ENCODE measurements at regions of chr6 and their contacts with region 1.

Region 1: GRCh38 chr6:138403801-138404661 is at the start of gene HEBP2:
- DNase-seq: peak; percentile 53 to 93 (median 73)
- H3K4me3 ChIP-seq: peak within 1 kb of the TSS; percentile 58 to 95 (median 81)
- H3K27ac ChIP-seq: peak within 1 kb of the TSS in 58 of 59 donors; percentile 43 to 93 (median 83)
- H3K27me3 ChIP-seq: no peaks in the 10 kb centered on the region
- CTCF ChIP-seq: peak in 54 of 56 donors; percentile 20 to 82 (median 60)
- total RNA-seq, gene HEBP2: 8.3 to 29.9 (median 17.4) TPM

Region 2: GRCh38 chr6:138129190-138129589 is 274.8 kb before region 1 on chr6:
- intact Hi-C with region 1: loop called in 1 of 2 experiments (anchors 10 kb)
- DNase-seq: no peak
- H3K4me3 ChIP-seq: no peak overlapping the region
- H3K27ac ChIP-seq: no peak overlapping the region
- H3K27me3 ChIP-seq: no peaks in the 10 kb centered on the region
- CTCF ChIP-seq: peak in 4 of 56 donors; percentile 6 to 15 (median 12)

Region 3: DNA sequence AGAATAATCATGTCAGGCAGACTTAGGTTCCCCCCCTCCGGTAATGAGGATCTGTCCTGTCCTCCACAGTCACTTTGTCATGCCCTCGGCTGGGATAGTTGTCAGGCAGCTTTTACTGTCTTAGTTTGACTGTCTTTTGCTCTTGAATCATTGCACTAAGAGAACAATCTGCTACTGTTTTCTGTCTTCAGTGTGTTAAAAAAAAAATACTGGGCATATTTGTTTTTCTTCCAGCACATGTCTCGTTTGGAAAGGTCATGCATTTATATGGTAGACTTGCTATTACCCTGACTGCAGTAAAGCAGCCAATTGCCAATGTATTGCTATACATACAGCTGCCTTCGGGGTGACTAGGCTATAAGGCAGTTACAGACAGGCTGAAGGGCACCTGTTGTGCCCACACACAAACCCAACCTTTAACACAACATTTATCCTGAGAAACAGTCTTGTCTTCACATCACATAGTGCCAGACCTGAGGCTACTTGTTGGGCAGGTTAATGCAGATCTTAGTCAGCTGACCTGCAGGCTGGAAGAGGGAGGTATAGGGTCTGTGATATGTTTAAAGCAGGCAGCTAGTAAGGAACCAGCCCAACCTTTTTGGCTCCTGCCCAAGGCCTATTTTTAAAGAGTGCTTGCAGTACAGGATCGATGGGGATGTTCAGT is 215.6 kb before region 1 on chr6:
- intact Hi-C with region 1: no loop called
- DNase-seq: peak in 1 of 10 donors; percentile 39
- H3K4me3 ChIP-seq: peak overlapping the region in 19 of 59 donors; percentile 1 to 46 (median 12)
- H3K27ac ChIP-seq: peak overlapping the region in 58 of 59 donors; percentile 52 to 98 (median 88)
- H3K27me3 ChIP-seq: no peaks in the 10 kb centered on the region
- CTCF ChIP-seq: no peak